Activated CD4-positive, alpha-beta memory T cell treated with anti-CD3 and anti-CD28 coated beads for 36 hours (primary cell): ENCODE measurements at regions of chr9 and their contacts with region 1.

Region 1: GRCh38 chr9:114988962-114989599 is 58.7 kb upstream of the TNFSF8 start:
- DNase-seq: peak; percentile 75
- H3K4me3 Mint-ChIP-seq: peak overlapping the region; percentile 5
- H3K27ac Mint-ChIP-seq: peak overlapping the region; percentile 94
- H3K4me1 Mint-ChIP-seq: peaks cover 65% of the 10 kb centered on the region
- H3K27me3 Mint-ChIP-seq: no peaks in the 10 kb centered on the region

Region 2: GRCh38 chr9:114385412-114386181 is 603.5 kb before region 1 on chr9:
- CTCF ChIA-PET with region 1: no interaction called
- POLR2A ChIA-PET with region 1: interaction called, 3 read pairs
- intact Hi-C with region 1: loop called (anchors 5 kb)
- DNase-seq: peak; percentile 95
- H3K4me3 Mint-ChIP-seq: peak overlapping the region; percentile 99
- H3K27ac Mint-ChIP-seq: peak overlapping the region; percentile 94
- H3K4me1 Mint-ChIP-seq: peaks cover 65% of the 10 kb centered on the region
- H3K27me3 Mint-ChIP-seq: no peaks in the 10 kb centered on the region

Region 3: DNA sequence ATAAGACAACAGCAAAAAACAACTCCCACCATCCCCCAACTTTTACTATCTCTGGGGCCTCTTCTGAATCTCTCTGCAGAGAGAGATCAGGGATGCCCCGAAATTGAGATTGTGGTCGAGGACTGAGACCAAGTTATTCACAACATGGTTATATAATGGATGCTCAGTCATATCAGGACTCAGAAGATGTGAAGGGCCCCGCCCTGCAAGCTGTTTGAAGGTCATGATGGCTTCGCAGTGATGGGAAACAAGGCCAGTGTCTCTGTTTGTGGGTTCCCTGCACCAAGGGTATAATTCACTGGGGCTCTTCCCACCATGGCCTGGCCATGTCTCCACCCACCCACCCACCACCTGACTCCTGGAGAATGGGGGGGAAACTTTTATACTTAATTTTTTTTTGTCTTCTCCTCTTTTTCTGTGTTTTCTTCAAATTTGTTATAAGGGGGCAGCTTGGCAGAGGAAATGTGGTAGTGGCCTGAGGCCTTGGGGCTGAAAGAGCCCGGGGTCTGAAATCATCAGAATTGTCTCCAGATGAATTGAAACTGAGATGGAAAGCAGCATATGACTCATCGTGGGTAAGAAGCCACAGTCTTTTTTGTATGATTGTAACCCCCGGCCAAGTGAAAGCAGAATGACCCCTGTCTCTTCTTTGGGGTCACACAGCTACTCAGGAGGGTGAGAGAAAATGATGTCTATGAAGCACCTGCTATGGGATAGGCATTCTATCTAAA is 292.1 kb before region 1 on chr9:
- CTCF ChIA-PET with region 1: no interaction called
- POLR2A ChIA-PET with region 1: interaction called, 24 read pairs
- intact Hi-C with region 1: loop called (anchors 1 kb)
- DNase-seq: peak; percentile 88
- H3K4me3 Mint-ChIP-seq: peak overlapping the region; percentile 42
- H3K27ac Mint-ChIP-seq: peak overlapping the region; percentile 99
- H3K4me1 Mint-ChIP-seq: peaks cover 87% of the 10 kb centered on the region
- H3K27me3 Mint-ChIP-seq: peaks cover 2% of the 10 kb centered on the region

Region 4: DNA sequence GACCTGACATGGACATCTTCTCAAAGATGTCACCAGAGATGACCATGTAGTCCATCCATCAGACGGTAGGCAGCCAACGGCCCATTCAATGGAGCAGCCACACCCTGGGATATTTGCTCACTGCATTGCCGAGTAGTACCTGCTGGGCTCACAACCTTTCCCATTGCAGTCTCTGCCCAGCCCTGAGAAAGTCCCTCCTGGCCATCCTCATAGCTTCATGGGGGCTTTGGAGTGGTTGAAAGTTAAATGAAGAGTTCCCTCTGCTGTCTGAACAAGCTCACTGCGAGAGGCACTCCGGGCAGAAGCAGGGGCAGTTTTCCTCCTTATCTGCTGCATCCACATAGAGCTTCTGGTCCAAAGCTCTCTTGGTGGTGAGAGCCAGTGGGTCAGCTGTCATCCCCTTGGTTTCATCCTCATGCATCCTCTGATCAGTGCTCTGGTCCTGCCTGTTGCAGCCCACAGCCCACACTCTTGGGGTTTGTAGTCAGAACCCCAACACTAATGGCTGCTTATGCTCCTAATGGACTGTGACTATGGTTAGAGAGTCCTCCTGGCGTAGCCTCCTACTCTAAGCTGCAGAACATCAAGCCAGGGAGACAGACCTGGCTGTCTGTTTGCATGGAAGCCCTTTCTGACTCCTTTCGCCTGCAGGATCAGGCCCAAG is 82.0 kb before region 1 on chr9:
- CTCF ChIA-PET with region 1: interaction called, 8 read pairs
- POLR2A ChIA-PET with region 1: interaction called, 3 read pairs
- intact Hi-C with region 1: loop called (anchors 1 kb)
- DNase-seq: peak; percentile 46
- H3K4me3 Mint-ChIP-seq: no peak overlapping the region
- H3K27ac Mint-ChIP-seq: peak overlapping the region; percentile 96
- H3K4me1 Mint-ChIP-seq: peaks cover 92% of the 10 kb centered on the region
- H3K27me3 Mint-ChIP-seq: no peaks in the 10 kb centered on the region

Region 5: GRCh38 chr9:114953917-114954316 is 35.2 kb before region 1 on chr9:
- CTCF ChIA-PET with region 1: no interaction called
- POLR2A ChIA-PET with region 1: interaction called, 4 read pairs
- intact Hi-C with region 1: loop called (anchors 1 kb)
- DNase-seq: peak; percentile 48
- H3K4me3 Mint-ChIP-seq: no peak overlapping the region
- H3K27ac Mint-ChIP-seq: no peak overlapping the region
- H3K4me1 Mint-ChIP-seq: peaks cover 35% of the 10 kb centered on the region
- H3K27me3 Mint-ChIP-seq: no peaks in the 10 kb centered on the region

Region 6: DNA sequence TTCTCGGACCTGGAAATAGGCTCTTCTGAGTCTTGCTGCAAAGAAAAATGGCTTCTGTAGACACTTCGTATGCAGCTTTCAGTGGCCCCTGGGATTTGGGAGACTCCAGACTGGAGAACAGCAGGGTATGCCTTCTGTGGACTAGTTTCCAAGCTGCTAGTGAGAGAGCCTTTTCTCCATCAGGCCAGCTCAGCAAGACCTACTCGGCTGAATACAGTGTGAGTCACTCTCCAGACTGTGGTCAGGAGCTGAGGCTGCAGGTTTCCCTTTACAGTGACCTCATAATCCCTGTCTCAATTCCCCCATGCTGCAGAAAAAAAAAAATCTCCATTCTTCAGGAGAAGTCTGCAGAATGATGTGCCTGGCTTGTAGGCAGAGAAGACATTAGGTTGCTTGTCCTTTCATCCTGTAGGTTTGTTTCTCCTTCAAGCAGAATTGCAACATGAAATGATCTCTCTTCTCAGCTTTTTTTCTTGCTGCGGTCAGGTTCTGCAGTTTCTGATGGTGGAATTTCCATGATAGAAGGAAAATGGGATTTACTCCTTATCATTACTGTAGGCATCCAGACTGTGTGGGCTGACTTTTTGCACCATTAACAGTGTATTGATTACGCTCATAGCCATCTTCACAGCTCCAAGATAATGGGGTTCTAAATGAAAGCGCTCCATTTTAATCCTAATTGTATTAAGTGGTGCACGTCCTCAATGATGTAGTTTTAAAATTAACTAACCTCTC is 19.6 kb after region 1 on chr9:
- CTCF ChIA-PET with region 1: interaction called, 22 read pairs
- POLR2A ChIA-PET with region 1: interaction called, 71 read pairs
- intact Hi-C with region 1: loop called (anchors 1 kb)
- DNase-seq: peak; percentile 68
- H3K4me3 Mint-ChIP-seq: no peak overlapping the region
- H3K27ac Mint-ChIP-seq: peak overlapping the region; percentile 15
- H3K4me1 Mint-ChIP-seq: peaks cover 86% of the 10 kb centered on the region
- H3K27me3 Mint-ChIP-seq: peaks cover 2% of the 10 kb centered on the region

Region 7: DNA sequence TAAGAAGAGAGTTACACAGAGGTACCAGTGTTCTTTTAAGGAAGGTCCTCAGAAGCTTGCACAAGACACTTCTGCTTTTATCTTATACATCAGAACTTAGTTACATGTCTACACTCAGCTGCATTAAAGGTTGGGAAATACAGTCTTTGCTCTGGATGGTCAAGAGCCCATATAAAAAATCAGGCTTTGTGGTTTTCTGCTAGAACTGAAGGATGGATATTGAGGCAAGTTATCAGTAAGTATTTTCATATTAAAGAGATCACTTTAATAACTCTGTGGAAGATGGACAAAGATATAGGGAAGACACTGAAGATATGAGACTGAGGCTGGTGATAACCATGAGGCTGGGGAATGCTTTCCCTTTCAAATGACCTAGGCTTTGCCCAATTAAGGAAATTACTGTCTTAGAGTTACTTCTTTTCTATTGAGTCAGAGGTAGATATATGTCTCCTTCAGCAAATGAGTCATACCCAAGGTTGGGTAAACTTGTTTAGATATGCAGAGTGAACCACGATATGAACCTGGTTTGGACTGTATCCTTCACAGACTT is 215.9 kb after region 1 on chr9:
- CTCF ChIA-PET with region 1: no interaction called
- POLR2A ChIA-PET with region 1: no interaction called
- intact Hi-C with region 1: loop called (anchors 1 kb)
- DNase-seq: no peak
- H3K4me3 Mint-ChIP-seq: no peak overlapping the region
- H3K27ac Mint-ChIP-seq: no peak overlapping the region
- H3K4me1 Mint-ChIP-seq: peaks cover 27% of the 10 kb centered on the region
- H3K27me3 Mint-ChIP-seq: peaks cover 46% of the 10 kb centered on the region